ENCODE measurements at regions of chr1 and their contacts with region 1.

Region 1: GRCh38 chr1:50774759-50775351 is 185.2 kb downstream of the FAF1 start:
- DNase-seq: no peak
- ATAC-seq: no peak

Region 2: DNA sequence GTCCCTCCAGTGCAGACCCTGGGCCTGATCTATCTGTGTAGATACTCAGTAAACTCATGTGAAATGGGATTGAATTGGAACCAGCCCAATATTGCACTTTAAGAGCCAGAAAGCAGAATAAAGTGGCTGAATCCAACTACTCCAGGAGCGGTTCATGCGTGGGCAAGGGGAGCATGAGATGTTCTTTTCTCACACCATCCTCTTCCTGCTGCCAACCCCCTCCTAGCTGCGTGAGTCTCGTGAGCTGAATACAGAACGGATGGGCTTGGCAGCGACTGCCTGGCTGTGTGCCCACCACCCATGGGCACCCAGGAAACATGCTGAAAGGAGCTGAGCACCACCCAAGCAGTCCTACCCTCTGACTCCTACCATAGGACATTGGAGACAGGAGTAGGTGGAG is 537.8 kb before region 1 on chr1:
- intact Hi-C with region 1: no loop called
- DNase-seq: no peak
- ATAC-seq: no peak

Region 3: GRCh38 chr1:50968158-50968820 is 193.4 kb after region 1 on chr1:
- intact Hi-C with region 1: loop called (anchors 2 kb)
- DNase-seq: peak; percentile 95
- ATAC-seq: peak; percentile 97

Region 4: GRCh38 chr1:51044834-51045233 is 270.0 kb after region 1 on chr1:
- intact Hi-C with region 1: loop called (anchors 2 kb)
- DNase-seq: no peak
- ATAC-seq: no peak

Region 5: DNA sequence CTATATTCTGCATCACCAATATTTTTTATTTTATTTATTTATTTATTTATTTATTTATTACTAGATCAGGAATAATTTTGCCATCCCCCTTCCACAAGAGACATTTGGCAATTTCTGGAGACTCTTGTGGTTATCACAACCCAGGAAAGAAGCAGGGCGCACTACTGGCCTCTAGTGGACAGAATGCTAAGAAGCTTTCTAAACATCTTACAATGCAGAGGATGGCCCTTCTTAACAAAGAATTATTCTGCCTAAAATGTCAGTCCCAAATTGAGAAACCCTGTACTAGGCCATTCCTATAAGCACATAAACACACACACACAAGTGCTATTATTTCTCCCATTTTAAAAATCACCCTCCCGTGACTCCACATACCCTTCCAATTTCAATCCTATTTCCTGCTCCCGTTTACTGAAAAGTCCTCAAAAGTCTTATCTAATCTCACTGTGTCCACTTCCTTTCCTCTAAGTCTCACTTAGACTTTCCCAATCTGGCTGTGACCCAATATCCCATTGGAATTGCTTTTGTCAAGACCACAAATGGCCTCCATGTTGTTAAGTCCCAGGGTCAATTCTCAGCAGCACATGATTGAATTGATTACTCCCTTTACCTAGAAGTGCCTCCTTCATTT is 417.5 kb after region 1 on chr1:
- intact Hi-C with region 1: loop called (anchors 2 kb)
- DNase-seq: peak; percentile 79
- ATAC-seq: peak; percentile 59